B cell (primary cell): ENCODE measurements at regions of chr1 and their contacts with region 1.

Region 1: GRCh38 chr1:94805912-94806311 is 14.2 kb upstream of the SLC44A3 start:
- DNase-seq: peak; percentile 69
- ATAC-seq: peak; percentile 87
- H3K4me3 ChIP-seq: no peak overlapping the region
- H3K4me3 Mint-ChIP-seq: no peak overlapping the region
- H3K27ac ChIP-seq: no peak overlapping the region
- H3K27ac Mint-ChIP-seq: no peak overlapping the region
- H3K4me1 ChIP-seq: peaks cover 0 to 6% of the 10 kb centered on the region in 2 donors
- H3K4me1 Mint-ChIP-seq: peaks cover 6% of the 10 kb centered on the region
- H3K27me3 ChIP-seq: peaks cover 0 to 8% (median 2%) of the 10 kb centered on the region in 4 experiments
- H3K27me3 Mint-ChIP-seq: peaks cover 5% of the 10 kb centered on the region
- CTCF ChIP-seq: peak; percentile 100

Region 2: DNA sequence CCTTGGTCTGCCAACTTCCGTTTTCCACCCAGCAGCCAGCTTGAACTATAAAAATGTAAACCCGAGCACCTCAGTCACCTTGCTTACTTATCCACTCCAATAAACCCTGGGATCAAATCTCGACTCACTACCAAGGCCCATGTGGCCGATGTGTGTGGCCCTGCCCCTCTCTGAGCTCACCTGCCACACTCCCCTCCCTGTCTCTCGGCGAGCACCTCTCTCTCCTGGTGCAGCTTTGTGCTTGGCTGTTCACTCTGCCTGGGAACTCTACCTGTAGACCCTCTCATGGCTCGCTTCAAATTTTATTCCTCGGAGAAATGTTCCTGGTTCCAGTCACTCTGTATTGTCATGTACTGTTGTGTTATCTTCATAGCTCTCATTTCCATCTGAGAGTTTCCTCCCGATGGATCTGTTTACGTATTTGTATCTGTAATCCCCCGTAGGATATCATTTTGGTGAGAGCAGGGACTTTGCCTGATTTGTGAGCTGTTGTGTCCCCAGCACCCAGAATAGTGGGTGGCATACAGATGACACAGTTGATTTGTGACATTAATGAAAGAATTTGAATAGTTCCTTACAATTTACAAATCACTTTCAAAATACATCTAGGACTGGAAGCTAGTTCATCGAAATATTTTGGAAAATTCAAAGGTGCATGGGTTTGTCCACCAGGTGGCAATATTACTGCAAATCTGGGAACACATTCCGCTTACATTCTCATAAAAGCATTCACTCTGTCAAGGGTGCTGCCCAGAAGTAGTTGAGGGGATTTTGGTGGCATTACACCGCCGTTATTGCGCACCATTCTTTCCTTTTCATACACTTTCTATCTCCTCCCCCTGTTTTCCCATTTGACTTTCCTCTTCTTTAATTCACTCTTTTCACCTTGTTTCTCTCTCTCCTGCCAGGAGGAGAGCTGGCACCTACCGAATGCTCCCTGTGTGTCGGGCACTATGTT is 780.2 kb before region 1 on chr1:
- CTCF ChIA-PET with region 1: interaction called, 17 read pairs
- POLR2A ChIA-PET with region 1: no interaction called
- intact Hi-C with region 1: loop called (anchors 5 kb)
- DNase-seq: peak; percentile 26
- ATAC-seq: no peak
- H3K4me3 ChIP-seq: no peak overlapping the region
- H3K4me3 Mint-ChIP-seq: no peak overlapping the region
- H3K27ac ChIP-seq: no peak overlapping the region
- H3K27ac Mint-ChIP-seq: no peak overlapping the region
- H3K4me1 ChIP-seq: no peaks in the 10 kb centered on the region
- H3K4me1 Mint-ChIP-seq: no peaks in the 10 kb centered on the region
- H3K27me3 ChIP-seq: peaks cover 0 to 3% (median 0%) of the 10 kb centered on the region in 4 experiments
- H3K27me3 Mint-ChIP-seq: peaks cover 17% of the 10 kb centered on the region
- CTCF ChIP-seq: peak; percentile 61

Region 3: GRCh38 chr1:94045465-94046056 is 760.4 kb before region 1 on chr1:
- CTCF ChIA-PET with region 1: interaction called, 14 read pairs
- POLR2A ChIA-PET with region 1: no interaction called
- intact Hi-C with region 1: loop called (anchors 5 kb)
- DNase-seq: peak; percentile 30
- ATAC-seq: no peak
- H3K4me3 ChIP-seq: peak overlapping the region in 1 of 5 experiments; percentile 7
- H3K4me3 Mint-ChIP-seq: peak overlapping the region; percentile 37
- H3K27ac ChIP-seq: no peak overlapping the region
- H3K27ac Mint-ChIP-seq: no peak overlapping the region
- H3K4me1 ChIP-seq: no peaks in the 10 kb centered on the region
- H3K4me1 Mint-ChIP-seq: peaks cover 7% of the 10 kb centered on the region
- H3K27me3 ChIP-seq: peaks cover 0 to 23% (median 2%) of the 10 kb centered on the region in 4 experiments
- H3K27me3 Mint-ChIP-seq: peaks cover 20% of the 10 kb centered on the region
- CTCF ChIP-seq: no peak

Region 4: GRCh38 chr1:94471271-94471670 is 334.6 kb before region 1 on chr1:
- CTCF ChIA-PET with region 1: interaction called, 44 read pairs
- POLR2A ChIA-PET with region 1: no interaction called
- intact Hi-C with region 1: no loop called
- DNase-seq: no peak
- ATAC-seq: no peak
- H3K4me3 ChIP-seq: no peak overlapping the region
- H3K4me3 Mint-ChIP-seq: no peak overlapping the region
- H3K27ac ChIP-seq: no peak overlapping the region
- H3K27ac Mint-ChIP-seq: no peak overlapping the region
- H3K4me1 ChIP-seq: no peaks in the 10 kb centered on the region
- H3K4me1 Mint-ChIP-seq: no peaks in the 10 kb centered on the region
- H3K27me3 ChIP-seq: no peaks in the 10 kb centered on the region
- H3K27me3 Mint-ChIP-seq: no peaks in the 10 kb centered on the region
- CTCF ChIP-seq: no peak

Region 5: GRCh38 chr1:94486990-94487389 is 318.9 kb before region 1 on chr1:
- CTCF ChIA-PET with region 1: interaction called, 182 read pairs
- POLR2A ChIA-PET with region 1: no interaction called
- intact Hi-C with region 1: no loop called
- DNase-seq: no peak
- ATAC-seq: no peak
- H3K4me3 ChIP-seq: no peak overlapping the region
- H3K4me3 Mint-ChIP-seq: no peak overlapping the region
- H3K27ac ChIP-seq: no peak overlapping the region
- H3K27ac Mint-ChIP-seq: no peak overlapping the region
- H3K4me1 ChIP-seq: no peaks in the 10 kb centered on the region
- H3K4me1 Mint-ChIP-seq: no peaks in the 10 kb centered on the region
- H3K27me3 ChIP-seq: no peaks in the 10 kb centered on the region
- H3K27me3 Mint-ChIP-seq: no peaks in the 10 kb centered on the region
- CTCF ChIP-seq: no peak

Region 6: GRCh38 chr1:94522304-94522703 is 283.6 kb before region 1 on chr1:
- CTCF ChIA-PET with region 1: interaction called, 64 read pairs
- POLR2A ChIA-PET with region 1: no interaction called
- intact Hi-C with region 1: no loop called
- DNase-seq: no peak
- ATAC-seq: no peak
- H3K4me3 ChIP-seq: no peak overlapping the region
- H3K4me3 Mint-ChIP-seq: no peak overlapping the region
- H3K27ac ChIP-seq: no peak overlapping the region
- H3K27ac Mint-ChIP-seq: no peak overlapping the region
- H3K4me1 ChIP-seq: no peaks in the 10 kb centered on the region
- H3K4me1 Mint-ChIP-seq: no peaks in the 10 kb centered on the region
- H3K27me3 ChIP-seq: no peaks in the 10 kb centered on the region
- H3K27me3 Mint-ChIP-seq: peaks cover 8% of the 10 kb centered on the region
- CTCF ChIP-seq: no peak

Region 7: DNA sequence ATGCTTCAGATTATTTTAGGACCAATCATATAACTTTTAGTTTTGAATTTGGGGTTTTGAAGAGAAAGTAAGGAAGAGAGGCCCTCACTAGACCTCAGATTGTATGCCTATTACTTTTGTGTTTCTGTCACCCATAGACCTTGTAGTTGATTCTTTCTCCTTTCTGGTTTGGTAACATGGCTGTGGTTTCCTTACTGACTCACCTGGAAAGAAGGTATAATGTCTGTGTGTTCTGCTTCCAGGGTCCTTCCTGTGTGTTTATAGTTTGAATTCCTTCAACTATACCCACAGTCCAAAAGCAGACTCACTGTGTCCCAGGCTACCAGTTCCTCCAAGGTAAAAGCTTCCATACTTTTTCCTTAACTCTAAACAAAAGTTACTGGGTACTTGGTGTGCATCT is 22.3 kb after region 1 on chr1:
- CTCF ChIA-PET with region 1: no interaction called
- POLR2A ChIA-PET with region 1: no interaction called
- intact Hi-C with region 1: no loop called
- DNase-seq: no peak
- ATAC-seq: no peak
- H3K4me3 ChIP-seq: no peak overlapping the region
- H3K4me3 Mint-ChIP-seq: no peak overlapping the region
- H3K27ac ChIP-seq: no peak overlapping the region
- H3K27ac Mint-ChIP-seq: no peak overlapping the region
- H3K4me1 ChIP-seq: peaks cover 0 to 4% of the 10 kb centered on the region in 2 donors
- H3K4me1 Mint-ChIP-seq: peaks cover 5% of the 10 kb centered on the region
- H3K27me3 ChIP-seq: peaks cover 0 to 7% (median 5%) of the 10 kb centered on the region in 4 experiments
- H3K27me3 Mint-ChIP-seq: peaks cover 38% of the 10 kb centered on the region
- CTCF ChIP-seq: no peak

Region 8: GRCh38 chr1:95043141-95043980 is 237.4 kb after region 1 on chr1:
- CTCF ChIA-PET with region 1: interaction called, 3 read pairs
- POLR2A ChIA-PET with region 1: no interaction called
- intact Hi-C with region 1: loop called (anchors 1 kb)
- DNase-seq: peak; percentile 87
- ATAC-seq: peak; percentile 99
- H3K4me3 ChIP-seq: no peak overlapping the region
- H3K4me3 Mint-ChIP-seq: no peak overlapping the region
- H3K27ac ChIP-seq: no peak overlapping the region
- H3K27ac Mint-ChIP-seq: no peak overlapping the region
- H3K4me1 ChIP-seq: peaks cover 0 to 3% of the 10 kb centered on the region in 2 donors
- H3K4me1 Mint-ChIP-seq: no peaks in the 10 kb centered on the region
- H3K27me3 ChIP-seq: no peaks in the 10 kb centered on the region
- H3K27me3 Mint-ChIP-seq: no peaks in the 10 kb centered on the region
- CTCF ChIP-seq: peak; percentile 99